ENCODE measurements at regions of chr5 and their contacts with region 1.

Region 1: GRCh38 chr5:87394411-87395165 is 18.1 kb downstream of the CCNH start:
- H3K4me3 Mint-ChIP-seq: no peak overlapping the region
- H3K27ac Mint-ChIP-seq: no peak overlapping the region
- H3K4me1 Mint-ChIP-seq: peaks cover 6% of the 10 kb centered on the region
- H3K27me3 Mint-ChIP-seq: no peaks in the 10 kb centered on the region

Region 2: DNA sequence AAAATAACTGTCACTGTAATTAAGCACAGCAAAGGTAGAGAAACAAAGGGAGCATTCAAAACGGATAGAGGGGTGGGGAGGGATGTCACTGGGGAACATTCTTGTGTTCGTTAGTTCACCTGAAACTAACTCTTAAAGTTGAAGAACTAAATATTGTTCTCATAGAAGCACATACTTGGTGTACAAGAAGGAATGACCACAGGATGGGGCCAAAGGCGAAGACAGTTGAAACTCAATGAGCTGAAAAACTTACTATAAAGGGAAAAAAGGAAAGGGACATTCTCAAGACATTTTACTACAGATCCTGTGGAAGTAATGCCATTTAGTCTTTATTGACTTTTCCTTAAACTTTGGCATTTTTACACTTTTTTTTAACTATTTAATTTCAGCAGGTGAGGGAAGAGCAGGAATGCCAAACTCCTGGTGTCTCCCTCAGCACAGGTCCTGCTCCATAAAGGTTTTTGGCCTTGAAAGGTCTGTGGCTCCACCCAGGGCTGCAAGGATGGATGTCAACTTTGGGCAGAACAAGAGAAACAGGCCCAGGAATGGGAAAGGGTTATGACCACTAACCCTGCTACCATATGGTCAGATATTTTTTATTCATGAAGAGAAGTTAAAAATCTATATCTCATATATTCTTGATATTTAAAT is 324.5 kb before region 1 on chr5:
- intact Hi-C with region 1: loop called (anchors 5 kb)
- H3K4me3 Mint-ChIP-seq: no peak overlapping the region
- H3K27ac Mint-ChIP-seq: no peak overlapping the region
- H3K4me1 Mint-ChIP-seq: peaks cover 5% of the 10 kb centered on the region
- H3K27me3 Mint-ChIP-seq: no peaks in the 10 kb centered on the region

Region 3: DNA sequence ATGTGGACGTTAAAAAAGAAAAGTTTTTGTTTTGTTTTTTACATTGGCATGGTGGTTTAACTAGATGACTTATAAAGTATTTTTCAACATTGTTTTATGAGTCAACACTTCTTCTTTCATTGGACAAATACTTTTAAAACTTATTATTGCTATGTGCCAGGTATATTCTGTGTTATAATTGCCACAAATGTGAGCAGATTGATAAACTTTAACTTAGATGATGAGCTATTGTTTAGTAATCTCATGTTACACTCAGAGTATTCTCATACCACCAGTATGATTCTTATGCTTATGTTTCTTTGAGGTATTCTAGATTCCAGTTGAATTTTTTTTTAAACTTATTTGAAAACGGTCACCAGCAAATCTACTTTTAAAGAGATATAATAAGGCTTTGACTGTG is 66.6 kb before region 1 on chr5:
- intact Hi-C with region 1: no loop called
- H3K4me3 Mint-ChIP-seq: no peak overlapping the region
- H3K27ac Mint-ChIP-seq: no peak overlapping the region
- H3K4me1 Mint-ChIP-seq: peaks cover 11% of the 10 kb centered on the region
- H3K27me3 Mint-ChIP-seq: no peaks in the 10 kb centered on the region

Region 4: DNA sequence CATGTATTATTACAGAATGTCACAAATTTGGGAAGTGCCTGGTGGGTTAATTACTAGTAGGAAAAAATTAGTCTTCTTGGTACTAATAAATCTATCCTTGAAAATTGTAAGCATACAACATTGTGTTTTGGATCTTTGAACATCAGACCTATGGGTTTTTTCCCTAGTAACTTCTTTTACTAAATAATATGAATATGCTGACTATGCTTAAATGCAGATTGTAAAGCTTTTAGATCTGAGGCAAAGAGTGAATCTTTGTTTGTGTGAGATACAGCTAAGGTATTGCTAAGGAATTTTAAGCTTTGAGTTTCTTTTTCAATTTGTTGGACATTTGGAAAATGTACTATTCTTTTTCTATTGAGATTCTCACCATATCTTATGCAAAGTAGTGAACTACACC is 408.8 kb after region 1 on chr5:
- intact Hi-C with region 1: no loop called
- H3K4me3 Mint-ChIP-seq: no peak overlapping the region
- H3K27ac Mint-ChIP-seq: no peak overlapping the region
- H3K4me1 Mint-ChIP-seq: no peaks in the 10 kb centered on the region
- H3K27me3 Mint-ChIP-seq: peaks cover 1% of the 10 kb centered on the region

Region 5: DNA sequence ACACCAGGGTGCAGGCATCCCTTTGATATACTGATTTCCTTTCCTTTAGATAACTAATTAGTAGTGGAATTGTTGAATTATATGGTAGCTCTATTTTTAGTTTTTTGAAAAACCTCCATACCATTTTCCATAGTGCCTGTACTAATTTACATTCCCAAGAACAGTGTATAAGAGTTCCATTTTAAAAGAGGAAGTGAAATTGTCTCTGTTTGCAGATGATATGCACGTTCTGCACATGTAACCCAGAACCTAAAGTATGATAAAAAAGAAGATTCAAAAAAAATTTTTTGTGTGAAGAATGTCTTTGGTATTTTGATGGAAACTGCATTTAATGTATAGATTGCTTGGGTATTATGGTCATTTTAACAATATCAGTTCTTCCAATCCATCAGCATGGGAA is 442.1 kb after region 1 on chr5:
- intact Hi-C with region 1: no loop called
- H3K4me3 Mint-ChIP-seq: no peak overlapping the region
- H3K27ac Mint-ChIP-seq: no peak overlapping the region
- H3K4me1 Mint-ChIP-seq: no peaks in the 10 kb centered on the region
- H3K27me3 Mint-ChIP-seq: no peaks in the 10 kb centered on the region

Measured in dendritic cell treated with granulocyte-macrophage colony-stimulating factor and Interleukin-4, amounts not matched to agents 40 ng/mL and 50 ng/mL, for 4 days (primary cell).